ENCODE measurements at regions of chr6 and their contacts with region 1.

Region 1: DNA sequence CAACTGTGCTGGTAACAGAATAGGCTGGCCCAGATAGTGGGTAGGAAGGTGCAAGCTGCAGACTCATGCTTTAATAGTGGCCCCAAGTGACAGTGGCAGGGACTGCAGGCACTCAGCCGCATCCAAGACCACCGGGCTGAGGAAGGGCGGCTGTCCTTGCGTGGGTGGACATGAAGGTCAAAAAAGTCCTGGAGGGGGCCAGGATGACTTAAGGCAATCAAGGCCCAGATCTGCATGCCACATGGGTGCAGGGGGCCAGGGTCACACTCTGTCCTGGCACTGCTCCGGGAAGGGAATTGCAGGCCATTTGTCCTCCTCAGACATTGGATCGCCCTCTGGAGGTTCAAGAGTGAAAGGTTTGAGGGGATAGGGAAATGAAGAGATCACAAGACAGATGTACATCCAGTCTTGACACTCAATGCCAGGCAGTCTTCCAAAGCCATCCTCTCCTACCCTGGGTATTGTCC is 10.4 kb upstream of the VNN2 start:
- DNase-seq: peak; percentile 44
- H3K4me3 Mint-ChIP-seq: no peak overlapping the region
- H3K27ac Mint-ChIP-seq: no peak overlapping the region
- H3K4me1 Mint-ChIP-seq: peaks cover 19% of the 10 kb centered on the region
- H3K27me3 Mint-ChIP-seq: no peaks in the 10 kb centered on the region

Region 2: GRCh38 chr6:132512638-132513632 is 255.1 kb before region 1 on chr6 and contains the start of gene STX7:
- CTCF ChIA-PET with region 1: no interaction called
- intact Hi-C with region 1: loop called (anchors 2 kb)
- DNase-seq: peak; percentile 83
- H3K4me3 Mint-ChIP-seq: peak within 1 kb of the TSS; percentile 95
- H3K27ac Mint-ChIP-seq: no peak within 1 kb of the TSS
- H3K4me1 Mint-ChIP-seq: peaks cover 26% of the 10 kb centered on the region
- H3K27me3 Mint-ChIP-seq: no peaks in the 10 kb centered on the region
- total RNA-seq, gene STX7: 11.3 to 11.7 TPM

Region 3: DNA sequence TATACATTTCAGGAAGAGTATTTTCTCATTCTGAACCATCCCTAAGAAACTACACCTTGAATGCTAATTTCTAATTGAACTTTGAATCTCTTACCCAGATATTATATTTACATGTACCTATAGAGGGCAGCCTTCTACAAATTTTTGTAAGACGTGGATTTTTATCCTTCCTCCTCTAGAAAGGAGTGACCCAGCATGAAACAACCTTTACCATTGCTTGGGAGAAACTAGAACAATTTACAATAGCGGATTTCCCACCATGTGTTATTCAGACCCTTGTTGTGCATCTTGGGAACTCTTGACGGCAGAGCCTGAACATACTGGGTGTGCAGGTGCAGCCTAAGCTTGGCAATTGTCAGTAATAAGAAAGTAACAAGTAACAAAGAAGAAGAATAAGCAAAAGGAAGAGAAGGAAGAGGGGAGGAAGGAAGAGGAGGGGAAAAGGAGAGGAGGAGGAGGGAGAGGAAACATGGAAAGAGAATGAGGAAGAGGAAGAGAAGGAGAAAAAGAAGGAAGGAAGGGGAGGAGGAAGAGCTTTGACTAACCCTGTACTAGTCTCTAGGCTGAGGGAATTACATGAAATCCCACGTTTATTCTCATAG is 98.3 kb before region 1 on chr6:
- CTCF ChIA-PET with region 1: interaction called, 35 read pairs
- intact Hi-C with region 1: loop called (anchors 1 kb)
- DNase-seq: no peak
- H3K4me3 Mint-ChIP-seq: no peak overlapping the region
- H3K27ac Mint-ChIP-seq: no peak overlapping the region
- H3K4me1 Mint-ChIP-seq: peaks cover 3% of the 10 kb centered on the region
- H3K27me3 Mint-ChIP-seq: no peaks in the 10 kb centered on the region

Region 4: GRCh38 chr6:132750455-132751248 is 17.4 kb before region 1 on chr6:
- CTCF ChIA-PET with region 1: interaction called, 5 read pairs
- intact Hi-C with region 1: loop called (anchors 1 kb)
- DNase-seq: no peak
- H3K4me3 Mint-ChIP-seq: no peak overlapping the region
- H3K27ac Mint-ChIP-seq: peak overlapping the region; percentile 25
- H3K4me1 Mint-ChIP-seq: peaks cover 23% of the 10 kb centered on the region
- H3K27me3 Mint-ChIP-seq: no peaks in the 10 kb centered on the region

Region 5: DNA sequence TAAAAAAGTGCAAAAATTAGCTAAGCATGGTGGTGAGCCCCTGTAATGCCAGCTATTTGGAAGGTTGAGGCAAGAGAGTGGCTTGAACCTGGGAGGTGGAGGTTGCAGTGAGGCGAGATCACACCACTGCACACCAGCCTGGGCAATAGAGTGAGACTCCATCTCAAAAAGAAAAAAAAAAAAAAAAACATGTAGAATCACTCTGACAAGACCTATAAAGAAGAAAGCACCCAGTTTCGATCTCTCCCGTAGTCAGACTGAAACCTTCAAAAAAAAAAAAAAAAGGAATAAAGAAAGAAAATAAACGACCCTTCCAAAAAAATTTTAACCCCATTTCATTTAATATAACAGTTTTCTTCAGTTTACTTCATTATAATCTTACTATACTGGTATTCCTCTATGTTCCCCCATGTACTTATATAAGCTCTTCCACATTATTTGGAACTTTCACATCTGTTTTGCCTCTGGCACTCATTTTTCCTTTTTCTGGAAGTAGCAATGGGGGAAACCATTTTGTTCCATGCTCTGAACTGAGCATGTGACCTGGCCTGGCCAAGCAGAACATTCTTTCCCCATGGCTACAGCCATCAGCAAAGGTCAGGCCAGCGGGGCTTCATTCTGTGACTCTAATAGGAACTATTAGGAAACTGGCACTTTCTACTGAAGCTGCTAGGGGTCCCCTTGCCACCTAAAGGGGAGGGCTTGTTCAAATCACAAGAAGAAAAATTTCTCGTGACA is 20.7 kb after region 1 on chr6:
- CTCF ChIA-PET with region 1: interaction called, 3 read pairs
- intact Hi-C with region 1: loop called (anchors 2 kb)
- DNase-seq: no peak
- H3K4me3 Mint-ChIP-seq: no peak overlapping the region
- H3K27ac Mint-ChIP-seq: peak overlapping the region; percentile 26
- H3K4me1 Mint-ChIP-seq: peaks cover 28% of the 10 kb centered on the region
- H3K27me3 Mint-ChIP-seq: no peaks in the 10 kb centered on the region

Region 6: DNA sequence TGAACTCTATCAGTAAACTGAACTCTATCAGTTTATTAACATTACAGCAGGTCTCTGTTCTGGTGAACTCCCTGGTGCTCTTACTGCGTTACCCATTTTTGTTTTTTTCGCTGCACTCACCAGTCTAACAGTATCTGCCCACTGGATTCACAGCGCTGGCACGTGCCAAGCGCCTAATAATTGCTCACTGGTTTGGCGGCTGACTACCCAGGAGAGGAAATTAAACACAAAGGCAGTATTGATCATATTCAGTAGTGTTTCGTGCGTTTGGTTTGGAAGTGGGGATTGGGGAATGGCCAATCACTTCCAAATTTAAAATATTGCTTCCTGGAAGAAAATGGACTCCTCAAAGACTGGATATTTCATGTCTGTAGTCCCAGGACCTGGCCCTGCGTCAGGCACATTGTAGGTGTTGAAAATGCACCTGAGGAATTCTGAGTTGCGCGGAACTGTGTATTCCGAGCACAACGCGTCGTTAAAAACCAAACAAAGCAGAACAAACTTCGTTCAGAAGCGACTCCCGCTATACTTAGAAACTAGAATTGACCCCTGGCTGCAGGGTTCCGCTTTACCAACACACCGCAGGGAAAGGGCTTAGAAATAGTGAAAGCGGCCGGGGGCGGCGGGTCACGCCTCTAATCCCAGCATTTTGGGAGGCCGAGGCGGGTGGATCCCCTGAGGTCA is 45.2 kb after region 1 on chr6:
- CTCF ChIA-PET with region 1: interaction called, 5 read pairs
- intact Hi-C with region 1: loop called (anchors 1 kb)
- DNase-seq: peak; percentile 51
- H3K4me3 Mint-ChIP-seq: peak overlapping the region; percentile 94
- H3K27ac Mint-ChIP-seq: peak overlapping the region; percentile 97
- H3K4me1 Mint-ChIP-seq: peaks cover 27% of the 10 kb centered on the region
- H3K27me3 Mint-ChIP-seq: no peaks in the 10 kb centered on the region

Region 7: DNA sequence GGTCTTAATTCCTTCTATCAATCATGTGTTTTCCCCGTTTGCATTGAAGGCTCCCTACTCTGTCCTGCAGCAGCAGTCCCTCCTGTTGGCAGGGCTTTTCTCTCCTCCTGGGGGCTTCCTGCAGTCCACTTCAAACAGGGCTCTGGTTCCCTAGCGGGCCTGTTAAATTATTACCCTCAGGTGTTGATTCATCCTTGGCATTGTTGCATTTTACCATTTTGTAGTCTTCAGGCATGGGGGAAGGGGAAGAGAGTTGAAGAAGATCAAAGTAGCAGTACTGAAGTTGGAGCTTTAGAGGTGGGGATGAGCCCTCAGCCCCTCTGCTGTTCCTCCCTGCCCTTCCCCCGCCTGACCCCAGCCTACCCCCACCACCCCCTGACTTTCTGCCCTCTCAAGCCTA is 642.5 kb after region 1 on chr6:
- CTCF ChIA-PET with region 1: no interaction called
- intact Hi-C with region 1: no loop called
- DNase-seq: no peak
- H3K4me3 Mint-ChIP-seq: no peak overlapping the region
- H3K27ac Mint-ChIP-seq: no peak overlapping the region
- H3K4me1 Mint-ChIP-seq: no peaks in the 10 kb centered on the region
- H3K27me3 Mint-ChIP-seq: peaks cover 2% of the 10 kb centered on the region

Measured in activated naive CD4-positive, alpha-beta T cell treated with anti-CD3 and anti-CD28 coated beads for 36 hours (primary cell).